Breast epithelium (tissue), 4 donors: ENCODE measurements at regions of chr19 and their contacts with region 1.

Region 1: GRCh38 chr19:32719611-32720059 is at the start of gene TDRD12:
- DNase-seq: no peak
- H3K4me3 ChIP-seq: peak within 1 kb of the TSS in 1 of 3 donors; percentile 16
- H3K27ac ChIP-seq: no peak within 1 kb of the TSS
- H3K4me1 ChIP-seq: no peaks in the 10 kb centered on the region
- H3K27me3 ChIP-seq: no peaks in the 10 kb centered on the region
- CTCF ChIP-seq: no peak
- POLR2A ChIP-seq: no peak
- total RNA-seq, gene TDRD12: 2.0 to 2.3 TPM in 2 of 3 donors, not detected in the other

Region 2: DNA sequence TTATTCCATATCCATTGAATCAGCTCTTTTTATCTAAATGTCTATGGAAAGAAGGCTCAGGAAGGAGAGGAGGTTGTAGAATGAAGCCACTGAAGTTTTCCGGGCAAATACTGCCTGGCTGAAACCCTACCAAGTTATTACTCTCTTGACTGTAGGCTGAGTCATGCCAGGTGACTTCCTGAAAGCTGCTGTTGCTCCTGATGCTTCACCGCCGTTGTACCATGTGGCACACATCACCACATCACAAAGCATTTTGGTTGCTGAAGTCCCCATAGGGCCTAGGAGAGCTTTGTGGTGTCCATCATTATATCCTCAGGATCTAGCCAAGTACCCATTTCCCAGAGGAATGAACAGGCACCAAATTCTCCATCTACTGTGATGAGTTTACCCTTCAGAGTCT is 11.2 kb before region 1 on chr19:
- intact Hi-C with region 1: loop called (anchors 1 kb)
- DNase-seq: no peak
- H3K4me3 ChIP-seq: no peak overlapping the region
- H3K27ac ChIP-seq: no peak overlapping the region
- H3K4me1 ChIP-seq: no peaks in the 10 kb centered on the region
- H3K27me3 ChIP-seq: no peaks in the 10 kb centered on the region
- CTCF ChIP-seq: no peak
- POLR2A ChIP-seq: no peak

Region 3: GRCh38 chr19:33005420-33005819 is 285.8 kb after region 1 on chr19:
- intact Hi-C with region 1: no loop called
- DNase-seq: no peak
- H3K4me3 ChIP-seq: no peak overlapping the region
- H3K27ac ChIP-seq: no peak overlapping the region
- H3K4me1 ChIP-seq: no peaks in the 10 kb centered on the region
- H3K27me3 ChIP-seq: no peaks in the 10 kb centered on the region
- CTCF ChIP-seq: no peak
- POLR2A ChIP-seq: no peak

Region 4: DNA sequence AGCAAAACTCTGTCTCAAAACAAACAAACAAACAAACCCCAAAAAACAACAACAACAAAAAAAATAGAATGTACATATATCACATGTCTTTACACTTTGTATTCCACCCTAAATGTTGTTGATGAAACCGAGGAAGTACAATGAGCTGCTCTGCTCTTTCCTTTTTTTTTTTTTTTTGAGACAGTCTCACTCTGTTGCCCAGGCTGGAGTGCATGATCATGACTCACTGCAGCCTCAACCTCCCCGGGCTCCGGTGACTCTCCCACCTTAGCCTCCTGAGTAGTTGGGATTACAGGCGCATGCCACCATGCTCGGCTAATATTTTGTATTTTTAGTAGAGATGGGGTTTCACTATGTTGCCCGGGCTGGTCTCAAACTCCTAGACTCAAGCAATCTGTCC is 443.8 kb after region 1 on chr19:
- intact Hi-C with region 1: no loop called
- DNase-seq: no peak
- H3K4me3 ChIP-seq: no peak overlapping the region
- H3K27ac ChIP-seq: no peak overlapping the region
- H3K4me1 ChIP-seq: no peaks in the 10 kb centered on the region
- H3K27me3 ChIP-seq: no peaks in the 10 kb centered on the region
- CTCF ChIP-seq: no peak
- POLR2A ChIP-seq: no peak